PC-3 (cell line): ENCODE measurements at regions of chr10 and their contacts with region 1.

Region 1: GRCh38 chr10:3043512-3044368 is 23.6 kb upstream of the PFKP start:
- DNase-seq: peak; percentile 62
- ATAC-seq: peak; percentile 83
- H3K4me3 ChIP-seq: no peak overlapping the region
- H3K27ac ChIP-seq: no peak overlapping the region
- H3K4me1 ChIP-seq: peaks cover 13% of the 10 kb centered on the region
- H3K27me3 ChIP-seq: no peaks in the 10 kb centered on the region
- CTCF ChIP-seq: peak; percentile 70

Region 2: GRCh38 chr10:1109795-1110673 is 1933.7 kb before region 1 on chr10:
- CTCF ChIA-PET with region 1: no interaction called
- POLR2A ChIA-PET with region 1: no interaction called
- intact Hi-C with region 1: loop called (anchors 5 kb)
- DNase-seq: peak; percentile 76
- ATAC-seq: peak; percentile 93
- H3K4me3 ChIP-seq: no peak overlapping the region
- H3K27ac ChIP-seq: no peak overlapping the region
- H3K4me1 ChIP-seq: peaks cover 3% of the 10 kb centered on the region; the same call in 1 of the 2 replicates
- H3K27me3 ChIP-seq: no peaks in the 10 kb centered on the region
- CTCF ChIP-seq: peak; percentile 60

Region 3: DNA sequence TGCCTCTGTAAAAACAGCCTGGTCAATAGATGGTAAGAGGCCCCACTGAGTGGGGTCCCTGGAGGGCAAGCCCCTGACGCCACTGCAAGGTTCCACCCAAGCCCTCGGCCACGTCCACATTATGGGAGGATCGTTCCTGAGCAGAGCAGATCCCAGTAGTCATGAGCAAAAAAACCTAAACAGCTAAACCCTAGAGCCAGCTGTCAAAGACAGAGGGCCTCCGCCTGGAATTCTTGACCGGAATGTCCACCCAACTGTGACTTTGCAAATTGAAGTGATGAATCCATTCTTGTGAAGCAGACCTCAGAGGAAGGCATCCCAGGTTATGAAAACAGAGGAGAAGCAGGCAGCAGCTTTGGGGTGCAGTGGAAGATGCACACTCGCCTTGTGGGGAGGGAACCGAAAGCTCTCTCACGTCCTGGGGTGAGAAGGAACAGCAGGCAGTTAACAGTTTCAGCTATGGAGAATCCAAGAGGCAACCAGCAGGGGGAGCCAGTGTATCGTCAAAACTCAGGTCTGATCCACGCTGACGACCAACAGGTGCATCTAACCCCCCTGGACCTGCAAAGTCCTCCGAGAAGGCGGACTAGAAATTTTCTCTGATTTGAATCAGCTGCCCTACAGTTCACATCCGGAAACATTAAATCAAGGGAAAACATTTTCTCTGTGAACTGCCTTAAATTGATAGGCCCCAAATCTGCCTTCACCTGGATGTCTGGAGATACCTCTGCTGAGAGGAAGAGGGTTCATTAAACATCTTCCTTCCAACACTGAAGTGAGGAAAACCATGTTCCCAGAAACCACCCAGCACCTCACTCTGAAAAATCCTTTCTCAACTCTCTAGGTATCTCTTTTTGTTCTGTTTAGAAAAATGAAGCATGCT is 115.5 kb before region 1 on chr10:
- CTCF ChIA-PET with region 1: interaction called, 3 read pairs
- POLR2A ChIA-PET with region 1: no interaction called
- intact Hi-C with region 1: loop called (anchors 2 kb)
- DNase-seq: peak; percentile 54
- ATAC-seq: peak; percentile 55
- H3K4me3 ChIP-seq: no peak overlapping the region
- H3K27ac ChIP-seq: no peak overlapping the region
- H3K4me1 ChIP-seq: no peaks in the 10 kb centered on the region
- H3K27me3 ChIP-seq: no peaks in the 10 kb centered on the region
- CTCF ChIP-seq: peak; percentile 62

Region 4: GRCh38 chr10:2938869-2939268 is 104.9 kb before region 1 on chr10:
- CTCF ChIA-PET with region 1: no interaction called
- POLR2A ChIA-PET with region 1: no interaction called
- intact Hi-C with region 1: loop called (anchors 1 kb)
- DNase-seq: peak; percentile 25
- ATAC-seq: peak; percentile 42; the same call in 1 of the 2 replicates
- H3K4me3 ChIP-seq: no peak overlapping the region
- H3K27ac ChIP-seq: no peak overlapping the region
- H3K4me1 ChIP-seq: no peaks in the 10 kb centered on the region
- H3K27me3 ChIP-seq: peaks cover 22% of the 10 kb centered on the region
- CTCF ChIP-seq: peak; percentile 42; the same call in 1 of the 2 replicates

Region 5: DNA sequence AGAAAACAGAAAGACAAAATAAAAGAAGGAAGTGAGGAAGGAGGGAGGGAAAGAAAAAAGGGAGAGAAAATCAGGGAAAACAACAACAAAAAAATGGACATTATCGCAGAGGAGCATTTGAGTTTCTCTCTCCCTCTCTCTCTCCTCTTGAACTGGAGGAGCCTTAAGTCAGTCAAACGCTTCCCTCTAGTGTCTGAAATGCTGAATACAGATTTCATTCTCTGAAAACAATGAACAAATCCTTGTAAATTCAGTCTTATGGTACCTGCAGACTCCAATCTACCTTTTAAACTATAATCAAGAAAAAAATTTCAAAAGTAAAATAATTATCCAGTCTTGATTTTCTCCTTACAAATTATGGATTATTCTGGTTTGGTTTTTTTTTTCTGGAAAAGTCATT is 65.6 kb before region 1 on chr10:
- CTCF ChIA-PET with region 1: interaction called, 4 read pairs
- POLR2A ChIA-PET with region 1: no interaction called
- intact Hi-C with region 1: loop called (anchors 5 kb)
- DNase-seq: peak; percentile 59
- ATAC-seq: peak; percentile 51; the same call in 1 of the 2 replicates
- H3K4me3 ChIP-seq: no peak overlapping the region
- H3K27ac ChIP-seq: no peak overlapping the region
- H3K4me1 ChIP-seq: no peaks in the 10 kb centered on the region
- H3K27me3 ChIP-seq: no peaks in the 10 kb centered on the region
- CTCF ChIP-seq: peak; percentile 60

Region 6: GRCh38 chr10:2994221-2994961 is 49.3 kb before region 1 on chr10:
- CTCF ChIA-PET with region 1: no interaction called
- POLR2A ChIA-PET with region 1: no interaction called
- intact Hi-C with region 1: no loop called
- DNase-seq: no peak
- ATAC-seq: no peak
- H3K4me3 ChIP-seq: no peak overlapping the region
- H3K27ac ChIP-seq: no peak overlapping the region
- H3K4me1 ChIP-seq: no peaks in the 10 kb centered on the region
- H3K27me3 ChIP-seq: no peaks in the 10 kb centered on the region
- CTCF ChIP-seq: no peak